ENCODE measurements at regions of chr1 and their contacts with region 1.

Region 1: DNA sequence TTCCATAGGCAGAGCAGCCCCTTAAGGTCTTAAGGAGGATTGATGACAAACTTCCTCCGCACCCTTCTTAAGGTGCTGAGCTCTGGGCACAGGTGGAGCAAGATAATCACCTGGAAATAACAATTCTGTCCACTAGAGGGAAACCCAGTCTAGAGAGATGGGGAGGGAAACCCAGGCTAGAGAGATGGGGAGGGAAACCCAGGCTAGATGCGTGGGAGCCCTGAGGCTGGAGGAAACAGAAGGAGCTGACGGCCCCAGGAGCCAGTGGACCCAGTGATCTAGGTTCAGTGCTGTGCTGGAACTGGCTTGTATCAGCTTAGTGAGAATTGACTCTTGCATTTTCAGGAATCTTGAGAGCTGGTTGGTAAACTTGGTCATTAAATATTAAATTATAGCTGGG is 17.8 kb upstream of the MYCL start:
- DNase-seq: peak; percentile 62 to 71
- ATAC-seq: peak; percentile 96 to 99
- H3K4me3 ChIP-seq: no peak overlapping the region
- H3K27ac ChIP-seq: no peak overlapping the region
- H3K4me1 ChIP-seq: no peaks in the 10 kb centered on the region
- CTCF ChIP-seq: peak; percentile 67
- EP300 ChIP-seq: no peak
- POLR2A ChIP-seq: no peak
- RAD21 ChIP-seq: peak; percentile 82 to 84

Region 2: GRCh38 chr1:39816415-39817090 is 103.0 kb before region 1 on chr1:
- CTCF ChIA-PET with region 1: interaction called, 19 read pairs
- POLR2A ChIA-PET with region 1: no interaction called
- DNase-seq: peak; percentile 44 to 68
- ATAC-seq: peak; percentile 88 to 90
- H3K4me3 ChIP-seq: no peak overlapping the region
- H3K27ac ChIP-seq: no peak overlapping the region
- H3K4me1 ChIP-seq: 0 out of 3 replicates have a peak, but pooled peaks cover 9% of the 10 kb centered on the region
- CTCF ChIP-seq: peak; percentile 64
- EP300 ChIP-seq: no peak
- POLR2A ChIP-seq: no peak
- RAD21 ChIP-seq: peak; percentile 64 to 71

Region 3: DNA sequence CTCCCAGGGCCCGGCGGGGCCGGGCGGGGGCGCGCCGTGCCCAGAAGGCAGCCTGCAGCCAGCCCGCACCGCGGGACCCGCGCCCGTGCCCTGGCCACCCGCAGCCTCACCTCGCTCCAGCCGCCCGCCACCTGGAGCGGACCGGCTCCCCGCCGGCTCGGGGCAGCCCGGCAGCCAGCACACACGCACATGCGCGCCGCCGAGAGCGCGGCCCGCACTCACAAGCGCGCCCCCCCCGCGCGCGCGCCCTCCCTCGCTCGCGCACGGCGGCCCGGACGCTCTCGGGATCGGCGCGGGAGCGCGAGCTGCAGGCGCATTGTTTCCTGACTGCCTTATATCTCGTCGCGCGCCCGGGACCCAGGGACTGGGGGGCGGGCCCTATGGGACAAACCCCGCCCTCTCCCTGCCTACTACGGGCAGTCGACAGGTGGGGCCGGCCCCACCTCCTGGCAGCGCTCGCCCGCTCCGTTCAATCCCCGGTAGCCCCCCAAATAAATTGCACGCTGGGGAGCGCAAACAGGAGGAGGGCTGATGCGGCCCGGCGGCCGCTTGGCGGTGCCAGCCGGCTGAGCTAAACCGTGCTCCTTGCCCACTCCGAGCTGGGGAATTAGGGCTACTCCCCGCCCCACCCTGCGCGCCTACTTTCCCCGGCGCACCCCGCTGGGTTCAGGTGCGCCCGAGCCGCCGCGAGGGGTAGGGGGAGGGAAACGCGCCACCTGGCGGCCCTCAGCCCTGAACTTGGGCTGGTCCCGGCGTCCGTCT is 17.7 kb before region 1 on chr1 and contains the start of gene MYCL:
- CTCF ChIA-PET with region 1: interaction called, 12 read pairs
- POLR2A ChIA-PET with region 1: no interaction called
- DNase-seq: peak; percentile 72 to 80
- ATAC-seq: peak; percentile 80 to 83
- H3K4me3 ChIP-seq: peak within 1 kb of the TSS; percentile 60
- H3K27ac ChIP-seq: peak within 1 kb of the TSS; percentile 71 to 83
- H3K4me1 ChIP-seq: peaks cover 10% of the 10 kb centered on the region; the same call in 2 of the 3 replicates
- CTCF ChIP-seq: peak; percentile 58
- EP300 ChIP-seq: no peak
- POLR2A ChIP-seq: peak; percentile 54
- RAD21 ChIP-seq: peak; percentile 40 to 68
- polyA plus RNA-seq, gene MYCL: 1.3 and 1.5 TPM in 2 replicates

Region 4: DNA sequence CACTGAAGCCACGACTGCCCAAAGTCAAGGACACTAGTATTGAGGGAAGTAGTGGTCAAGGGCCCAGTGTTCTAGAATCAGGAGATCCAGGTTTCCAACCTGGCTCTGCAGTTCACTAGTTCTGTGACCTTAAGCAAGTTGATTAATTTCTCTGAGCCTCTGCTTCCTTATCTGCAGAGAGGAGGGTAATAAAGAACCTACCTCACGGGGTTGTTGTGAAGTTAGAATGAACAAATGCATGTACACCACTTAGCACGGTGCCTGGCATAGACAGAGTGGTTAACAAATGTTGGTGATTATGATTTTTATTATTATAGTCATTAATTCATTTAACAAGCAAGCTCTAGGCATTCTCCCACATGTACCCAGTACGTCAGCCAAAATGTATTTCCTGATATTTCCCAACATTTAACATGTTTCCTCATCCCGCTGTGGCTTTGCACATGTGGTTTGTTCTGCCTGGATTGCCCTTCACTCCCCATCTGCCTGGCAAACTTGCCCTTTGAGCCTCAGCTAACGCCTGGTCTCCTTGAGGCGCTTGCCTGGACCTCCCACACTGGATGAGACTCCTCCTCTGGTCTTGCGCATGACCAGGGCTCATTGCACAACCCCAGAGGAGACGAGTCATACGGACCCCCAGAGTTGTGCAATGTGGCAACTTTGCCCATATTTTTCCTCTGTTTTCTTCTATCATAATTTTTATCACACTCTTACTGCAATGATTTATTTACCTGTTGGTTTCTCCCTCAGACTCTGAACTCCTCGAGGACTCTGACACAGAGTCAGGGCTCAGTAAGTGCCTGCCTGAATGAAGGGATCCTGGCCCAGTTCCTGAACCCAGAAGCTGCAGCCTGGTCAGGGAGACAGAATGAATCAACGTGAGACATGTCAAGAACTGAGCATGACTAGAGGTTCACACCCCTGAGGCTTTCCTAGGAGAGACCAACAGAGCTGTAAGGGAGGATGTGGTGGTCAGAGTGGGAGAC is 14.7 kb after region 1 on chr1:
- CTCF ChIA-PET with region 1: interaction called, 32 read pairs
- POLR2A ChIA-PET with region 1: no interaction called
- DNase-seq: peak; percentile 48 to 83
- ATAC-seq: peak; percentile 96 to 97
- H3K4me3 ChIP-seq: no peak overlapping the region
- H3K27ac ChIP-seq: peak overlapping the region; percentile 76 to 88
- H3K4me1 ChIP-seq: peaks cover 20% of the 10 kb centered on the region
- CTCF ChIP-seq: no peak
- EP300 ChIP-seq: peak; percentile 52 to 64; a peak in 3 of 5 replicates
- POLR2A ChIP-seq: no peak
- RAD21 ChIP-seq: no peak

Region 5: GRCh38 chr1:39954816-39955546 is 35.4 kb after region 1 on chr1 and contains the start of gene MFSD2A:
- CTCF ChIA-PET with region 1: interaction called, 21 read pairs
- POLR2A ChIA-PET with region 1: no interaction called
- DNase-seq: peak; percentile 77 to 78
- ATAC-seq: peak; percentile 95 to 98
- H3K4me3 ChIP-seq: peak within 1 kb of the TSS; percentile 70
- H3K27ac ChIP-seq: peak within 1 kb of the TSS; percentile 60 to 87
- H3K4me1 ChIP-seq: peaks cover 11% of the 10 kb centered on the region; the same call in 2 of the 3 replicates
- CTCF ChIP-seq: no peak
- EP300 ChIP-seq: no peak
- POLR2A ChIP-seq: peak; percentile 73
- RAD21 ChIP-seq: no peak
- polyA plus RNA-seq, gene MFSD2A: 3.1 and 3.9 TPM in 2 replicates

Region 6: DNA sequence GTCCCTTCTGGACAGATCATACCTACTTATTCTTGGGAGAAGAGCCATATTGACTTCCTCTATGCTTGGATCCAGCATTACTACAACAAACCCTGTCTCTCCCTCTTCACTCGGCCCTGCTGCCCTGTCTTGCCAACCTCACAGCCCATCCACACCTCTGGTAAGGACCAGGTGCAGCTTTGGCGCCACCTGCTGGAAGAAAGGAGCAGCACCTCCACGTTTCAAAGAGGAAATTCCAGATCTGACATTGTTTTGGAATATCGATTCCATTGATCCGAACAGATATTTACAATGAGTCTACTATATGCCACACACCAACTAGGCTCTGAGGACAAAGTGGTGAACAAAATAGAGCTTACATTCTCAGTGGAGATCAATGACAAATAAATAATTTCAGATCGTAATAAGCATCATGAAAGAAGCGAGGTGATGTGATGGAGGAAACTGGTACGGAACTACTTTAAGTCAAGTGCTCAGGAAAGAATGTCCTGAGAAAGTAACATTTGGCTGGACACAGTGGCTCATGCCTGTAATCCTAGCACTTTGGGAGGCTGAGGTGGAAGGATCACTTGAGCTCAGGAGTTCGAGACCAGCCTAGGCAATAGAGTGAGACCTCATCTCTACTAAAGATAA is 54.1 kb after region 1 on chr1:
- CTCF ChIA-PET with region 1: interaction called, 151 read pairs
- POLR2A ChIA-PET with region 1: no interaction called
- DNase-seq: peak; percentile 54 to 59
- ATAC-seq: peak; percentile 82 to 93
- H3K4me3 ChIP-seq: no peak overlapping the region
- H3K27ac ChIP-seq: no peak overlapping the region
- H3K4me1 ChIP-seq: peaks cover 5% of the 10 kb centered on the region; the same call in 1 of the 3 replicates
- CTCF ChIP-seq: peak; percentile 82
- EP300 ChIP-seq: no peak
- POLR2A ChIP-seq: no peak
- RAD21 ChIP-seq: peak; percentile 93

Region 7: GRCh38 chr1:40003156-40004148 is 83.9 kb after region 1 on chr1:
- CTCF ChIA-PET with region 1: no interaction called
- POLR2A ChIA-PET with region 1: no interaction called
- DNase-seq: no peak
- ATAC-seq: no peak
- H3K4me3 ChIP-seq: no peak overlapping the region
- H3K27ac ChIP-seq: no peak overlapping the region
- H3K4me1 ChIP-seq: no peaks in the 10 kb centered on the region
- CTCF ChIP-seq: no peak
- EP300 ChIP-seq: no peak
- POLR2A ChIP-seq: no peak
- RAD21 ChIP-seq: no peak

Region 8: DNA sequence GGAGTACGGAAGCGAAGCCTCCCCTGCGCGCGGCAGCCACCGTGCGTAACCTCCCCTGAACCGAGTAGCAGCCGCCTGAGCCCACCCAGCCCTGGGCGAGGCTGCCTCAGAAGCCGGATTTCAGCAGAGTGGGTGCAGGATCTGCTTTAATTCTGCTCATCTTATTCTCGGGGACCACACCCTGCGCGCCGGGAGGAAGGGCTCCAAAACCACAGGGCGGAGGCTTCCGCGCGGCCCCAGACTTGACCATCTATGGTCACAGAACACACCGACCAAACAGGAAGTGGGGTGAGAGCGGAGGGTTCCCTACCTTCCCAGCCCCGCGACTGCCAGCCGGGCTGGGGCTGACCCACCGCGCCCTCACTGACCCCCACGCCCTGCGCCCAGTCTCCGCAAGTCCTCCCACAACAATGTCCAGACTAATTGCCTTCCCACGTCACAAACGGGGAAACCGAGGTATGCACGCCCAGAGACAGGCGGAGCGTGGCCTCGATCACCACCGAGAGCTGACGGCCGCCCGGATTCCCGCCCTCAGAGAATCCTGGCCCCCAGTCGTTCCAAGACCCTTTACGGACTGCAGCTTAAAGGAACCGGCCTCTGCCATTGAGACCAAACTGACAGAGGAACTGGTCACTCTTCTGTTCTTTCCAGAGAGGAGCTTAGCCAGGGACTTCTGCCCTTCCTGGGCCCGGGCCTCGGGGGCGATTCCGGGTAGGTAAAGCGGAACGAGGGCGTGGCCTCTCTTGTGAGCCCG is 120.4 kb after region 1 on chr1:
- CTCF ChIA-PET with region 1: interaction called, 121 read pairs
- POLR2A ChIA-PET with region 1: no interaction called
- DNase-seq: peak; percentile 60 to 88
- ATAC-seq: peak; percentile 87 to 88
- H3K4me3 ChIP-seq: peak overlapping the region; percentile 99
- H3K27ac ChIP-seq: peak overlapping the region; percentile 99 to 100
- H3K4me1 ChIP-seq: peaks cover 26% of the 10 kb centered on the region
- CTCF ChIP-seq: no peak
- EP300 ChIP-seq: no peak
- POLR2A ChIP-seq: peak; percentile 35
- RAD21 ChIP-seq: no peak